GM23248 (cell line): ENCODE measurements at regions of chr1 and their contacts with region 1.

Region 1: DNA sequence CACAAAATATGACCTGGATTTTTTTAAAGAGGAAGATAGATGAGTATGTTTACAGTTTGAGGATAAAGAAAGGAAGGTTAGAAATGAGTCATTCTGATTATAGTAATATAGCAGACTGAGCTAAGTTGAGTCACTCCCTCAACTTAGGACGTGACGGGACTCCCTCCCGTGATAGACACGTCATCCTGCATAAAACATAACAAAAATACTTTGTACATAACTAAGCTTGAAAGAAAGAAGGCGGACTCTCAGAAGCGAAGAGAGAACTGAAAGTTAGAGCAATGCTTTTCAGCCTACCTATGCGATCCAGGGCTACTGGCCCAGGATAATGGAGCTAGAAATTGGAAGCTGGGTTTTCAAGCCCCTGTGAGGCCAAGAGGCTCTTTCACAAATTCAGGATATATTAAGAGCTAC is 53.0 kb upstream of the DESI2 start:
- DNase-seq: peak; percentile 98
- H3K4me3 ChIP-seq: peak overlapping the region; percentile 71
- H3K27ac ChIP-seq: peak overlapping the region; percentile 81
- H3K4me1 ChIP-seq: peaks cover 8% of the 10 kb centered on the region
- H3K27me3 ChIP-seq: no peaks in the 10 kb centered on the region

Region 2: GRCh38 chr1:244792188-244792850 is 192.4 kb after region 1 on chr1:
- in situ Hi-C with region 1: loop called (anchors 5 kb)
- DNase-seq: peak; percentile 59
- H3K4me3 ChIP-seq: no peak overlapping the region
- H3K27ac ChIP-seq: no peak overlapping the region
- H3K4me1 ChIP-seq: peaks cover 4% of the 10 kb centered on the region; the same call in 1 of the 2 replicates
- H3K27me3 ChIP-seq: no peaks in the 10 kb centered on the region

Region 3: DNA sequence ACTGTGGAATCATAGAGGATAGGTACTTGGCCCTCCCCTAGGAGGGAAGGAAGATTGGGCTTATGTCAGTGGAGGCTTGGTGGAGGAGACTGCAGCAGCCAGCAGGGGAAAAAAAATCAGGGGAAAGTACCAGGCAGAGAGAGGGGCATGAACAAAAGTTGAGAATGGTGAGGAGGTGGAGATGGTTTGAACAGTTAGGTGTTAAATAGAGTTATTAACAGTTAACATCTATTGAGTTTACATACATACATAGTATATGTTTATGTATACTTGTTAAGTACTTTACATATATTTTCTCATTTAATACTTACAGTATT is 400.9 kb after region 1 on chr1:
- in situ Hi-C with region 1: no loop called
- DNase-seq: no peak
- H3K4me3 ChIP-seq: no peak overlapping the region
- H3K27ac ChIP-seq: no peak overlapping the region
- H3K4me1 ChIP-seq: no peaks in the 10 kb centered on the region
- H3K27me3 ChIP-seq: no peaks in the 10 kb centered on the region